Calu3 (cell line): ENCODE measurements at regions of chr5 and their contacts with region 1.

Region 1: GRCh38 chr5:146662229-146662628 is 146.2 kb upstream of the GPR151 start:
- DNase-seq: peak; percentile 28
- H3K4me3 Mint-ChIP-seq: no peak overlapping the region
- H3K27ac Mint-ChIP-seq: no peak overlapping the region
- H3K4me1 Mint-ChIP-seq: no peaks in the 10 kb centered on the region
- H3K27me3 Mint-ChIP-seq: peaks cover 16% of the 10 kb centered on the region
- CTCF ChIP-seq: peak; percentile 50

Region 2: GRCh38 chr5:146426853-146427618 is 235.2 kb before region 1 on chr5:
- CTCF ChIA-PET with region 1: no interaction called
- intact Hi-C with region 1: no loop called
- DNase-seq: no peak
- H3K4me3 Mint-ChIP-seq: no peak overlapping the region
- H3K27ac Mint-ChIP-seq: no peak overlapping the region
- H3K4me1 Mint-ChIP-seq: no peaks in the 10 kb centered on the region
- H3K27me3 Mint-ChIP-seq: peaks cover 41% of the 10 kb centered on the region
- CTCF ChIP-seq: peak; percentile 58

Region 3: GRCh38 chr5:146588326-146589027 is 73.8 kb before region 1 on chr5:
- CTCF ChIA-PET with region 1: no interaction called
- intact Hi-C with region 1: no loop called
- DNase-seq: no peak
- H3K4me3 Mint-ChIP-seq: no peak overlapping the region
- H3K27ac Mint-ChIP-seq: no peak overlapping the region
- H3K4me1 Mint-ChIP-seq: no peaks in the 10 kb centered on the region
- H3K27me3 Mint-ChIP-seq: peaks cover 15% of the 10 kb centered on the region
- CTCF ChIP-seq: no peak

Region 4: DNA sequence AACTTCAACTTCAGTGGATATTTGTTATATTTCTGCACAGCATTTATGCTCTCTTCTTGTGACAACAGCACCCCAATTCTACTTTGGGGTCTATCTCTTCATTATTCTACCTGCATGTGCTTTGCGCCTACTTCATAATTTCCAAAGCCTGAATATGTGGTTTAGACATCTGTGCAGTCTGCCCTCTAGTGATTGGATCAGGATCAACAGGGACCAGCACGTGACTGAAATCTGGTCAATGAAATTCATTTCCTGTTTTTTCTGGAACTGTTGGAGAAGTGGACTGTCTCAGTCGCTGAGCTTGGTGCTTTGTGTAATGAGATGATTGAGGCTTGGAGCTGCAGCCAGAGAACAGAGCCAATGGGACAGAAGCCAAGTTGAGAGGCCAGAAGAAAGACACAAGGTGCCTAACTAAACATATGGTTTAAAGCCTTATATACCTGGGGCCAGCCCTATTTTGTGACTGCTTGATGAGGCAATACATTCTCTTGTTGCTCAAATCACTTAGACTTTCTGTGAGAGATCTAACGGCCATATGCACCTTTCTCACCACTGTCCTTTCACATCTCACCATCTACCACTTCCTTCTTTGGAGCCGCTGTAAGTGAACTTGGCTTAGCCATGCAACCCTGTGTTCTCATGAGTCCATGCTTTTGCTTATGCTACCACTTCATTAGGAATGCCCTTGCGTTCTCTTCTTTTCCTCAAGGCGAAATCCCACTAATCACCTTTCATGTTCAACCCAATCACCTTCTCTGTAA is 285.1 kb after region 1 on chr5:
- CTCF ChIA-PET with region 1: no interaction called
- intact Hi-C with region 1: loop called (anchors 5 kb)
- DNase-seq: peak; percentile 29
- H3K4me3 Mint-ChIP-seq: no peak overlapping the region
- H3K27ac Mint-ChIP-seq: no peak overlapping the region
- H3K4me1 Mint-ChIP-seq: peaks cover 16% of the 10 kb centered on the region
- H3K27me3 Mint-ChIP-seq: no peaks in the 10 kb centered on the region
- CTCF ChIP-seq: peak; percentile 35